Naive thymus-derived CD4-positive, alpha-beta T cell (primary cell): ENCODE measurements at regions of chr20 and their contacts with region 1.

Region 1: GRCh38 chr20:12970372-12970821 is 38.4 kb upstream of the SPTLC3 start:
- DNase-seq: peak in 3 of 9 donors; percentile 19 to 34 (median 22)
- ATAC-seq: no peak
- H3K4me3 ChIP-seq: no peak overlapping the region
- H3K4me3 Mint-ChIP-seq: no peak overlapping the region
- H3K27ac ChIP-seq: no peak overlapping the region
- H3K27ac Mint-ChIP-seq: no peak overlapping the region
- H3K4me1 ChIP-seq: no peaks in the 10 kb centered on the region
- H3K4me1 Mint-ChIP-seq: peaks cover 0 to 11% (median 3%) of the 10 kb centered on the region in 7 donors
- H3K27me3 ChIP-seq: no peaks in the 10 kb centered on the region
- H3K27me3 Mint-ChIP-seq: peaks cover 0 to 7% (median 0%) of the 10 kb centered on the region in 5 donors

Region 2: DNA sequence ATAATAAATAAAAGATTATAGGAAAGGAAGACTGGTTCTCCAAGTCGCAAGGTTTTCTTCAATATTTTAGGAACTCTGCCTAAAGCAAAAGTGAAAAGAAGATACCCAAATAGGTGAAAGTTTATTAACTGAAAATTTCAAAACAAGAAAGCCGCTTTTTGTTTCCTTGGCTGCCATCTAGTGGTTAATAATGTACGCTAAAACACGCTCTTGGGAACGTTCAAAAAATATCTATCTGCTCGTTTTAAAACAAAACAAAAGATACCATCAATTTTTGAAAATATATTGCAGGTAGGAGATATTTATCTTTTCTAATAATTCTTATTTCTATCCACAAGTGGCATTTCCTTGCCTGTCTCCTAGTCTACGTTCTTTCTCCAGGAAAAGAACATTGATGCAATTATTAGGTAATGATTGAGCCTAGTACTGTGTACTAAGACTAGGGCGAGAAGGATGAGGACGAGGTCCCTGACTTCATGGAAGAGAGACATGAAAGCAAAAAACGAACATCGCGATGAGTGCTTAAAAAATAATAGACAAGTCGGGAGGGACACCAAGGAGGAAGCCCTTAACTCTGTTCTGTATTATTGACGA is 135.6 kb after region 1 on chr20:
- CTCF ChIA-PET with region 1: no interaction called
- POLR2A ChIA-PET with region 1: no interaction called
- intact Hi-C with region 1: loop called in 1 of 2 experiments (anchors 1 kb)
- DNase-seq: peak in 5 of 9 donors; percentile 10 to 34 (median 14)
- ATAC-seq: no peak
- H3K4me3 ChIP-seq: no peak overlapping the region
- H3K4me3 Mint-ChIP-seq: no peak overlapping the region
- H3K27ac ChIP-seq: no peak overlapping the region
- H3K27ac Mint-ChIP-seq: no peak overlapping the region
- H3K4me1 ChIP-seq: no peaks in the 10 kb centered on the region
- H3K4me1 Mint-ChIP-seq: no peaks in the 10 kb centered on the region
- H3K27me3 ChIP-seq: no peaks in the 10 kb centered on the region
- H3K27me3 Mint-ChIP-seq: peaks cover 0 to 6% (median 5%) of the 10 kb centered on the region in 5 donors

Region 3: DNA sequence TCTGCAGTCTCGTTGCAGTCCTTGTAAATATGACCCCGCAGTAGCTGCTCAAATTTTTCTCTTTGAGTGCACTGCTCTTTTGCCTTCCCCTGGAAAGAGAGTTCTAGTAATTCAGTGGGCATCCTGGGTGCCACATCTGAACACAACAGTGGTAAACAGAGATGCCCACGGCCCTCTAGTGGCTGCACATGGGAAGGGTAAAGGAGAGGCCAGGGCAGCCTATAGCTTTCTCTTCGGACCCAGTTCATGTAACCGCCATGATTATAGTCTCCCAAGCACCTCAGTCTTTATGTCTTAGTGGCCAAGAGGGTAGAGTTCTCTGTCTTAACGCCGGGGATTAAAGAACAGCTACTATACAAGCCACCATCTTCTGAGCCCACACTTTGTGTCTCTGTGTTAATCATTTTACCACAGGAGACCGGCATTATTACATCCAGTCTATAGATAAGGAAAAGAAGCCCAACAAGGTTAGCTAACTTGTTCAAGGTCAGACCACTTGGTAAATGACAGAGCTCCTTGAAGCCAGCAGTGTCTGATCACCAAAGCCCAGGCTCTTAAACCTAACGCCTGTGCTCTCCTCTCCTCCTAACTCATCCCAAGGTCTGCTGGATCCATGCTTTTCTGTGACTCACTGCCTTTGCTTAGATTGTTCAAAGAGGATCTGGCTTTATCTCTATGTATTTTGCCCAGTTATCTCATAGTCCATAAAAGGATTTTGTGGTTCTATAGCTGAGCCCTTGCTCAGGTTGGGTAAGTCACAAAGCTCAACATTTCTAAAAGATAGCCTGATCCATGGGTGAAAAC is 332.5 kb after region 1 on chr20:
- CTCF ChIA-PET with region 1: no interaction called
- POLR2A ChIA-PET with region 1: no interaction called
- intact Hi-C with region 1: loop called in 1 of 2 experiments (anchors 5 kb)
- DNase-seq: peak in 8 of 9 donors; percentile 10 to 51 (median 40)
- ATAC-seq: peak; percentile 72
- H3K4me3 ChIP-seq: no peak overlapping the region
- H3K4me3 Mint-ChIP-seq: no peak overlapping the region
- H3K27ac ChIP-seq: no peak overlapping the region
- H3K27ac Mint-ChIP-seq: no peak overlapping the region
- H3K4me1 ChIP-seq: no peaks in the 10 kb centered on the region
- H3K4me1 Mint-ChIP-seq: no peaks in the 10 kb centered on the region
- H3K27me3 ChIP-seq: no peaks in the 10 kb centered on the region
- H3K27me3 Mint-ChIP-seq: peaks cover 0 to 4% (median 0%) of the 10 kb centered on the region in 5 donors

Region 4: DNA sequence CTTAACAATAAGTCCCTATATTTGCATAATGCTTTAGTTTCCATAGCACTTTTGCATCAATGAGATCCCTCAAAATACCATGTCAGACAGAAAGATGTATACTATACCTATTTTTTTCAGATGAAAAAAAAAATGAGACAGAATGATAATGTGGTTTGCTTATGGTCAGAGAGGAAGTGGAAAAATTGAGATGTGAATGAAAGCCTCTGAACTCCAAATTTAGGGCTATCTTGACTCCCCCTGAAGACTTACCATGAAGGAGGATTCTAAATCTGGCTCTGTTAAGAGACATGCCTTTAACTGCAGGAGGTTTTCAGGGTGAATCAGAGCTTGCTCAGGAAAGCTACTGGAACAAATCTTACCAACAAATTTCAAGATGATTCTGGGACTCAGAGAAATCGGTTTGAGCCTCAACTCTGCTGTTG is 426.9 kb after region 1 on chr20:
- CTCF ChIA-PET with region 1: no interaction called
- POLR2A ChIA-PET with region 1: no interaction called
- intact Hi-C with region 1: no loop called
- DNase-seq: no peak
- ATAC-seq: no peak
- H3K4me3 ChIP-seq: no peak overlapping the region
- H3K4me3 Mint-ChIP-seq: no peak overlapping the region
- H3K27ac ChIP-seq: no peak overlapping the region
- H3K27ac Mint-ChIP-seq: no peak overlapping the region
- H3K4me1 ChIP-seq: no peaks in the 10 kb centered on the region
- H3K4me1 Mint-ChIP-seq: no peaks in the 10 kb centered on the region
- H3K27me3 ChIP-seq: no peaks in the 10 kb centered on the region
- H3K27me3 Mint-ChIP-seq: no peaks in the 10 kb centered on the region

Region 5: GRCh38 chr20:13546497-13547131 is 576.2 kb after region 1 on chr20:
- CTCF ChIA-PET with region 1: no interaction called
- POLR2A ChIA-PET with region 1: no interaction called
- intact Hi-C with region 1: loop called in 1 of 2 experiments (anchors 2 kb)
- DNase-seq: peak; percentile 10 to 72 (median 44)
- ATAC-seq: peak; percentile 64
- H3K4me3 ChIP-seq: no peak overlapping the region
- H3K4me3 Mint-ChIP-seq: no peak overlapping the region
- H3K27ac ChIP-seq: no peak overlapping the region
- H3K27ac Mint-ChIP-seq: no peak overlapping the region
- H3K4me1 ChIP-seq: no peaks in the 10 kb centered on the region
- H3K4me1 Mint-ChIP-seq: peaks cover 0 to 4% (median 0%) of the 10 kb centered on the region in 7 donors
- H3K27me3 ChIP-seq: no peaks in the 10 kb centered on the region
- H3K27me3 Mint-ChIP-seq: no peaks in the 10 kb centered on the region

Region 6: GRCh38 chr20:13784893-13785715 is 814.7 kb after region 1 on chr20 and contains the starts of genes ESF1 and NDUFAF5:
- CTCF ChIA-PET with region 1: no interaction called
- POLR2A ChIA-PET with region 1: no interaction called
- intact Hi-C with region 1: loop called in 1 of 2 experiments (anchors 5 kb)
- DNase-seq: peak; percentile 71 to 93 (median 90)
- ATAC-seq: peak; percentile 99
- H3K4me3 ChIP-seq: peak within 1 kb of the TSS; percentile 83
- H3K4me3 Mint-ChIP-seq: peak within 1 kb of the TSS; percentile 92 to 100 (median 99)
- H3K27ac ChIP-seq: peak within 1 kb of the TSS; percentile 91
- H3K27ac Mint-ChIP-seq: peak within 1 kb of the TSS; percentile 91 to 98 (median 96)
- H3K4me1 ChIP-seq: peaks cover 14 to 21% of the 10 kb centered on the region in 2 donors
- H3K4me1 Mint-ChIP-seq: peaks cover 32 to 85% (median 69%) of the 10 kb centered on the region in 7 donors
- H3K27me3 ChIP-seq: no peaks in the 10 kb centered on the region
- H3K27me3 Mint-ChIP-seq: peaks cover 0 to 2% (median 0%) of the 10 kb centered on the region in 5 donors
- total RNA-seq, gene ESF1: 7.9 to 16.9 (median 14.5) TPM
- total RNA-seq, gene NDUFAF5: 23.8 to 43.6 (median 28.9) TPM

Region 7: GRCh38 chr20:14055127-14055742 is 1084.8 kb after region 1 on chr20:
- CTCF ChIA-PET with region 1: no interaction called
- POLR2A ChIA-PET with region 1: no interaction called
- intact Hi-C with region 1: loop called in 1 of 2 experiments (anchors 5 kb)
- DNase-seq: peak in 5 of 9 donors; percentile 2 to 28 (median 11)
- ATAC-seq: no peak
- H3K4me3 ChIP-seq: no peak overlapping the region
- H3K4me3 Mint-ChIP-seq: no peak overlapping the region
- H3K27ac ChIP-seq: no peak overlapping the region
- H3K27ac Mint-ChIP-seq: no peak overlapping the region
- H3K4me1 ChIP-seq: no peaks in the 10 kb centered on the region
- H3K4me1 Mint-ChIP-seq: peaks cover 0 to 2% (median 0%) of the 10 kb centered on the region in 7 donors
- H3K27me3 ChIP-seq: no peaks in the 10 kb centered on the region
- H3K27me3 Mint-ChIP-seq: peaks cover 0 to 4% (median 0%) of the 10 kb centered on the region in 5 donors